CD4-positive, alpha-beta T cell (primary cell): ENCODE measurements at regions of chr2 and their contacts with region 1.

Region 1: GRCh38 chr2:215269397-215270119 is 42.3 kb upstream of the ATIC start:
- DNase-seq: peak; percentile 16 to 79 (median 41)
- ATAC-seq: no peak
- H3K4me3 ChIP-seq: no peak overlapping the region
- H3K4me3 Mint-ChIP-seq: no peak overlapping the region
- H3K27ac ChIP-seq: no peak overlapping the region
- H3K27ac Mint-ChIP-seq: no peak overlapping the region
- H3K4me1 ChIP-seq: no peaks in the 10 kb centered on the region
- H3K4me1 Mint-ChIP-seq: no peaks in the 10 kb centered on the region
- H3K27me3 ChIP-seq: no peaks in the 10 kb centered on the region
- H3K27me3 Mint-ChIP-seq: no peaks in the 10 kb centered on the region
- CTCF ChIP-seq: peak; percentile 91

Region 2: GRCh38 chr2:213806125-213806726 is 1463.3 kb before region 1 on chr2:
- CTCF ChIA-PET with region 1: no interaction called
- POLR2A ChIA-PET with region 1: no interaction called
- intact Hi-C with region 1: loop called (anchors 5 kb)
- DNase-seq: peak in 1 of 14 experiments; percentile 1
- ATAC-seq: no peak
- H3K4me3 ChIP-seq: no peak overlapping the region
- H3K4me3 Mint-ChIP-seq: no peak overlapping the region
- H3K27ac ChIP-seq: no peak overlapping the region
- H3K27ac Mint-ChIP-seq: no peak overlapping the region
- H3K4me1 ChIP-seq: no peaks in the 10 kb centered on the region
- H3K4me1 Mint-ChIP-seq: no peaks in the 10 kb centered on the region
- H3K27me3 ChIP-seq: no peaks in the 10 kb centered on the region
- H3K27me3 Mint-ChIP-seq: no peaks in the 10 kb centered on the region
- CTCF ChIP-seq: peak; percentile 25

Region 3: DNA sequence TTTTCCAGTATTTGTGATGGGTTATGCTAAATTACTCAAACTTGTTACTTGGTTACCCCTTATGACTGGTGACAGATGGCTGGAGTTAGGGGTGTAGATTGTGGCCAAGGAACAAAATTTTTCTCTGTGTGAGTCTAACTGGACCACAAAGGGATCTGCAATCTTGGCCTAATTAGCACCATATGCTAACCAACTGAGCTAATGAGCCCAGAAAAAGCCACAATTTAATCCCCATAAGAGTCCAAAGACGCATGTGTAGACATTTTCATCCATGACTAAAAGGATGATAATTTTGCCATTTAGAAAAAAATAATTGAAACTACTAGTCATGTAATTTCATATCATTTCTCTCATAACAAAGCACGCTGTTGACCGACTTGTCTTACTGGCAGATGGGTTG is 282.3 kb before region 1 on chr2:
- CTCF ChIA-PET with region 1: no interaction called
- POLR2A ChIA-PET with region 1: no interaction called
- intact Hi-C with region 1: no loop called
- DNase-seq: no peak
- ATAC-seq: no peak
- H3K4me3 ChIP-seq: no peak overlapping the region
- H3K4me3 Mint-ChIP-seq: no peak overlapping the region
- H3K27ac ChIP-seq: no peak overlapping the region
- H3K27ac Mint-ChIP-seq: no peak overlapping the region
- H3K4me1 ChIP-seq: no peaks in the 10 kb centered on the region
- H3K4me1 Mint-ChIP-seq: no peaks in the 10 kb centered on the region
- H3K27me3 ChIP-seq: no peaks in the 10 kb centered on the region
- H3K27me3 Mint-ChIP-seq: no peaks in the 10 kb centered on the region
- CTCF ChIP-seq: no peak

Region 4: GRCh38 chr2:215920244-215921100 is 650.9 kb after region 1 on chr2:
- CTCF ChIA-PET with region 1: no interaction called
- POLR2A ChIA-PET with region 1: no interaction called
- intact Hi-C with region 1: loop called in 1 of 2 experiments (anchors 2 kb)
- DNase-seq: peak; percentile 18 to 77 (median 42)
- ATAC-seq: peak; percentile 66
- H3K4me3 ChIP-seq: no peak overlapping the region
- H3K4me3 Mint-ChIP-seq: no peak overlapping the region
- H3K27ac ChIP-seq: no peak overlapping the region
- H3K27ac Mint-ChIP-seq: no peak overlapping the region
- H3K4me1 ChIP-seq: no peaks in the 10 kb centered on the region
- H3K4me1 Mint-ChIP-seq: no peaks in the 10 kb centered on the region
- H3K27me3 ChIP-seq: peaks cover 0 to 4% of the 10 kb centered on the region in 2 experiments
- H3K27me3 Mint-ChIP-seq: peaks cover 8% of the 10 kb centered on the region
- CTCF ChIP-seq: peak; percentile 72